ENCODE measurements at regions of chr14 and their contacts with region 1.

Region 1: DNA sequence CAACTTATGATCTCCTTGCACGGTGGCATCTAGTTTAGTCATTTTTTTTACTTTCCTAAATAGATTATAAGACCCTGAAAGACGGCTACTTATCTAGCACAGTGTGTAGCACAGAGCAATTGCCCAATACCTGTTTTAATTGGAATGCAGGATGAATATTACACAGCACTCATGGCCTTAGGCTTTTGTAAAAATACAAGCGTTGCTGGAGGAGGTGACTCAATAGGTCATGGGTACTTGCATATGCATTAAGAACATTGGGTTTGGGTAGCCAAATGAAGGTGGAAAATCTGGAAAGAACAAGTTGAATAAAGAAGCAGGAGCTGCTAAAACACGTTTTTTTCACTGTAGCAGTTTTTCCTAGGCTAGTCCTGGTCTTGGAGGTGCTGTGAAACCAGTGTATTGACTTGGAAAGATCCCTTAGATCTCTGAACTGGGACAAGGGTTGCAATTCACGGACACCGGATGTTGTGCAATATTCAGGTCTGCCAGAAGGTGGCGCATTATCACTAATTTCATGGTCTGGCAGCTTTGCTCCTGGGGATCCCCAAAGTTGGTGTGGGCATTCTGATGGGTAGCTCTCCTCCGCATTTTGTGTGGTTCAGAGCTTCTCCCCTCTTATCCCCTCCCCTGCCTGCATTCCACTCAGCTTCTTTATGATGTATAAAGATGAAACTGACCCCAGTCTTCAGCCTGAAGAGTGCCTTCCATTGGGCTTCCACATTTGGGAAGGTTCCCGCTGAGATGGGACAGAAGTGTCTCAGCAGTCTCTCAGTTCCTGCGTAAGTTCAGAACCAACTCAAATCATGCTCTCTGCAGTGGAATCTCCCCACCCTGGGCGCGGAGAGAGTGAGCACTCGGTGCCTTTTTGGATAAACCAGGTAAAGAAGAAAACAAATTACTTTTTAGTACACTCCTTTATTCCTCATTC is 278.3 kb downstream of the NRXN3 start:
- DNase-seq: peak; percentile 70
- ATAC-seq: no peak
- H3K4me3 Mint-ChIP-seq: no peak overlapping the region
- H3K27ac Mint-ChIP-seq: no peak overlapping the region
- H3K4me1 Mint-ChIP-seq: no peaks in the 10 kb centered on the region
- H3K27me3 Mint-ChIP-seq: peaks cover 2% of the 10 kb centered on the region

Region 2: DNA sequence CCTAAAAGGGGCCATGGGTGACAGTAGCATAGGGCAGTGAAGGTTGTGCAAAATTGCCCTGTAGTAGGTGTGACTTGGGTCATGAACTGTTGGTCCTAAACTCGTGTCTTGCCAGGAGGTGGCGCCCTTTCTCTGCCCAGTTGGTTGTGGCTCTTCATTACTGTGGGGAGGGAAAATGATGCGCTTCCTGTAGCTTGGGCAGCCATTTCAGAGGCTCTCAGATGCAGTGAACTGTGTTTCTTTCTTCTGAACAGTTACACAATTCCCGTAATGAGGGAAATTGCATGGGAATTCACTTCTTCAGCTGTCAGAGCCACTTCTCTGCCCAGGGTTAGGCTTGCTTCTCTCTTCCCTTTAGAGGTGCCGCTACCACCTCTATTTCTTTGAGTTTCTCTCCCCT is 426.4 kb before region 1 on chr14:
- CTCF ChIA-PET with region 1: no interaction called
- POLR2A ChIA-PET with region 1: no interaction called
- intact Hi-C with region 1: loop called in 1 of 2 experiments (anchors 5 kb)
- DNase-seq: peak; percentile 88
- ATAC-seq: peak; percentile 88
- H3K4me3 Mint-ChIP-seq: no peak overlapping the region
- H3K27ac Mint-ChIP-seq: no peak overlapping the region
- H3K4me1 Mint-ChIP-seq: no peaks in the 10 kb centered on the region
- H3K27me3 Mint-ChIP-seq: peaks cover 19% of the 10 kb centered on the region

Region 3: DNA sequence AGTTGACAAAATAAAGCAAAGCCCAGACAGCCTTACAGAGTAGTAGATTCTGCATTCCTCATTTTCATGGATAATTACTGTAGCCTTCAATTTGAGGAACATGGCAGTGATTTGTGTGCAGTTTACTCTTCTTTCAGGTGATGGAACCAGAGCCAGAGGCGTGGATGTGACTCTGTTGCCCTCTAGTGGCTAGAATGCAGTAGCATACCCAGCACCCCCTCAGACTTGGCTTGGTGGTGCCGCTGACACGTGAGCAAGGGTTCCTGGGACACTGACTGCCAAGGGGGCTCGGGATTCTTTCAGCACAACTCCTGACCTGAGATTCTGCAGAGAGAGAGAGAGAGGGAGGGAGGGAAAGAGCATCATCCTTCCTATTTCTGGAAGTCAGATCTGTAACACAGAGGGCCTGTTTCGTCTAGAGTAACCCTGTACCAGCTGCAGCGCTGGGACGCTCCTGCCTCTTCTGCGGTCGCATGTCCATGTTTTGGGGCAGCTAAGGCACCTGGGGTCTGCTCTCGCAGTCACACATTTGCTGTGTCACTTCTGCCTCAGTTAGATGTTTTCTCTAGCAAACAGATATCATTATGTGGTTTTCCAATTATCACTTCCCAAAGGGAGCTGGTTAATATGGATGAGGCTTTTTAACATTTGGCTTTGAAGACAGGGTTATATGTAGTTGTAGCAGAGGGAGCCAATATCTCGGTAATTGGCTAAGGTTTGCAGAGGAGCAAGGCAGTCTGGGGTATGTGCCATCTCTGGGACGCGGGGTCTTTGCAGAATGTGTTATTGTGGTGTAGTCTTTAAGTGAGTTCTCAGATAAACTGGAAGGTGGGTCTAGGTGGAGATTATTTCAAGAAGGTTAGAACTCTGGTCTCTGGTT is 149.9 kb after region 1 on chr14:
- CTCF ChIA-PET with region 1: interaction called, 6 read pairs
- POLR2A ChIA-PET with region 1: no interaction called
- intact Hi-C with region 1: loop called (anchors 1 to 10 kb)
- DNase-seq: peak; percentile 67
- ATAC-seq: peak; percentile 88
- H3K4me3 Mint-ChIP-seq: no peak overlapping the region
- H3K27ac Mint-ChIP-seq: no peak overlapping the region
- H3K4me1 Mint-ChIP-seq: no peaks in the 10 kb centered on the region
- H3K27me3 Mint-ChIP-seq: peaks cover 22% of the 10 kb centered on the region

Region 4: GRCh38 chr14:78697341-78697740 is 248.9 kb after region 1 on chr14:
- CTCF ChIA-PET with region 1: no interaction called
- POLR2A ChIA-PET with region 1: no interaction called
- intact Hi-C with region 1: loop called in 1 of 2 experiments (anchors 1 kb)
- DNase-seq: no peak
- ATAC-seq: no peak
- H3K4me3 Mint-ChIP-seq: no peak overlapping the region
- H3K27ac Mint-ChIP-seq: no peak overlapping the region
- H3K4me1 Mint-ChIP-seq: no peaks in the 10 kb centered on the region
- H3K27me3 Mint-ChIP-seq: peaks cover 4% of the 10 kb centered on the region

Region 5: GRCh38 chr14:78836777-78837176 is 388.3 kb after region 1 on chr14:
- CTCF ChIA-PET with region 1: no interaction called
- POLR2A ChIA-PET with region 1: no interaction called
- intact Hi-C with region 1: loop called in 1 of 2 experiments (anchors 2 kb)
- DNase-seq: peak; percentile 52
- ATAC-seq: no peak
- H3K4me3 Mint-ChIP-seq: no peak overlapping the region
- H3K27ac Mint-ChIP-seq: no peak overlapping the region
- H3K4me1 Mint-ChIP-seq: no peaks in the 10 kb centered on the region
- H3K27me3 Mint-ChIP-seq: peaks cover 6% of the 10 kb centered on the region

Region 6: DNA sequence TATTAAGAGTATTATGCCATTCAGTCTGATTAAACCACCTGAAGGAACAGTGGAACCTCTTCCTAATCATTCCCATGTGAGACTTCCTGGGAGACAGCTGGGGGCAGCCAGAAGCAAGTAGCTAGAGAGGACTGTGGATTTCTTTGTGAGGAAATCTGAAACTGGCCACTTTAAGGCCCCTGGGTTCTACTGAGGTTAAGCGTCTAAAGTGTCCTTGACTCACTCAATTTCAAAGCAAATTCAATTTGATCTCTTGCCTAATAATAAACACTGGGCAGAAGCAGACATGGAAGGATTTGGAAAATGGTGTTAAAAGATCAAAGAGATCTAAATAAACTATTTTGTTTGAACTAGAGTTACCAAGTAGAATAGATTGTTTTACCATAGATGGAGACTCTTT is 631.6 kb after region 1 on chr14:
- CTCF ChIA-PET with region 1: no interaction called
- POLR2A ChIA-PET with region 1: no interaction called
- intact Hi-C with region 1: no loop called
- DNase-seq: no peak
- ATAC-seq: no peak
- H3K4me3 Mint-ChIP-seq: no peak overlapping the region
- H3K27ac Mint-ChIP-seq: no peak overlapping the region
- H3K4me1 Mint-ChIP-seq: no peaks in the 10 kb centered on the region
- H3K27me3 Mint-ChIP-seq: no peaks in the 10 kb centered on the region